Sigmoid colon (tissue), 7 donors: ENCODE measurements at regions of chr3 and their contacts with region 1.

Region 1: DNA sequence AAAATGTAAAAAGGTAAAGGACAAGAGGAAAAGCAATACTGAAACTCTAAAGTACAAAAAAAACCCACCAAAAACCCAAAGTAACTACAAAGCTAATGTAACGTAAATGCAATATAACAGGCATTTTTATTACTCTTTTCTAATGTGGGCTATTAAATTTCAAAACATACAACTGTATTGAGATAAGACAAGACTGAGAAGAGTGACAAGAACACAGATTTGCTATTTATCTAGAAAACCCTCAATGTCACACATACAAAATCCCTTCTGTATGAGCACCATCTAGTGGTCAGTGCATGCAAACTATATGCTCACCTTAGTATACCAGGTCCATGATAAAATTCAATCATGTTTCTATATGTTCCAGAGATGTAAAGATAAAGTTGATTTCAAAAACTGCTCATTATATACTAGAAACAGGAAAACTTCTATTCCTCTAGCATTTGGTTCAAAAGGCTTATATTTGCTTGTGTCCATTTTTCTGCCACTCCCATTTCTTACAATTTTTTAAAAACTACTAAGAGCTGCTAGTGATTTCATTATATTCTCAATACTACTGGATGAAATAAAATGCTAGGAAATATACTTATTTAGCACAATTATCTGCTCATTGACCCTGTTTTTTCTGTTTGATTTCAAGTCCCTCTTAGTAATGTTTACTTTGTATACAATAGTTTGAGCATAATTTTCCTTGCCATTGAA is 111.4 kb downstream of the DLG1 start:
- DNase-seq: no peak
- H3K4me3 ChIP-seq: no peak overlapping the region
- H3K27ac ChIP-seq: no peak overlapping the region
- H3K4me1 ChIP-seq: no peaks in the 10 kb centered on the region
- H3K27me3 ChIP-seq: no peaks in the 10 kb centered on the region
- CTCF ChIP-seq: peak; percentile 40 to 79 (median 64)
- EP300 ChIP-seq: no peak
- POLR2A ChIP-seq: no peak

Region 2: GRCh38 chr3:196979545-196979944 is 207.5 kb before region 1 on chr3:
- intact Hi-C with region 1: loop called (anchors 2 kb)
- DNase-seq: no peak
- H3K4me3 ChIP-seq: no peak overlapping the region
- H3K27ac ChIP-seq: no peak overlapping the region
- H3K4me1 ChIP-seq: peaks cover 0 to 8% (median 2%) of the 10 kb centered on the region in 4 donors
- H3K27me3 ChIP-seq: no peaks in the 10 kb centered on the region
- CTCF ChIP-seq: no peak
- EP300 ChIP-seq: no peak
- POLR2A ChIP-seq: no peak

Region 3: GRCh38 chr3:197002701-197003454 is 184.2 kb before region 1 on chr3:
- intact Hi-C with region 1: loop called (anchors 2 kb)
- DNase-seq: peak; percentile 85
- H3K4me3 ChIP-seq: peak overlapping the region; percentile 46 to 80 (median 72)
- H3K27ac ChIP-seq: peak overlapping the region; percentile 82 to 90 (median 86)
- H3K4me1 ChIP-seq: peaks cover 0 to 18% (median 13%) of the 10 kb centered on the region in 4 donors
- H3K27me3 ChIP-seq: no peaks in the 10 kb centered on the region
- CTCF ChIP-seq: peak in 3 of 4 experiments; percentile 19 to 79 (median 41)
- EP300 ChIP-seq: no peak
- POLR2A ChIP-seq: no peak

Region 4: DNA sequence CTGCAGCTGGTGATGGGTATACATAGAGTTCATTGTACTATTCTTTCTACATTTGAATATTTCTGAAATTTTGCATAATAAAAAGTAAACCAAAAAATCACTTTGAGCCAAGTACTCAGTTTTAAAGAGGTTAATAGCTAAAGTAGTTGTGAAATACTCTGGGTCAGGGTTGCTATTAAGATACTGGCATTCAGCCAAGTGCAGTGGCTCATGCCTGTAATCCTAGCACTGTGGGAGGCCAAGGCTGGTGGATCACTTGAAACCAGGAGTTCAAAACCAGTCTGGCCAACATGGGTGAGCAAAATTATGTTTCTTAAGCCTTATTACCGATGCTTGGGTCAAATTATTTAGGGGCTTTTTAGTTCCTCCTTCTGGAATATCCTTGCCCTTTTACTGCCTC is 35.5 kb before region 1 on chr3:
- intact Hi-C with region 1: no loop called
- DNase-seq: no peak
- H3K4me3 ChIP-seq: no peak overlapping the region
- H3K27ac ChIP-seq: no peak overlapping the region
- H3K4me1 ChIP-seq: no peaks in the 10 kb centered on the region
- H3K27me3 ChIP-seq: no peaks in the 10 kb centered on the region
- CTCF ChIP-seq: no peak
- EP300 ChIP-seq: no peak
- POLR2A ChIP-seq: no peak